ENCODE measurements at regions of chr17 and their contacts with region 1.

Region 1: DNA sequence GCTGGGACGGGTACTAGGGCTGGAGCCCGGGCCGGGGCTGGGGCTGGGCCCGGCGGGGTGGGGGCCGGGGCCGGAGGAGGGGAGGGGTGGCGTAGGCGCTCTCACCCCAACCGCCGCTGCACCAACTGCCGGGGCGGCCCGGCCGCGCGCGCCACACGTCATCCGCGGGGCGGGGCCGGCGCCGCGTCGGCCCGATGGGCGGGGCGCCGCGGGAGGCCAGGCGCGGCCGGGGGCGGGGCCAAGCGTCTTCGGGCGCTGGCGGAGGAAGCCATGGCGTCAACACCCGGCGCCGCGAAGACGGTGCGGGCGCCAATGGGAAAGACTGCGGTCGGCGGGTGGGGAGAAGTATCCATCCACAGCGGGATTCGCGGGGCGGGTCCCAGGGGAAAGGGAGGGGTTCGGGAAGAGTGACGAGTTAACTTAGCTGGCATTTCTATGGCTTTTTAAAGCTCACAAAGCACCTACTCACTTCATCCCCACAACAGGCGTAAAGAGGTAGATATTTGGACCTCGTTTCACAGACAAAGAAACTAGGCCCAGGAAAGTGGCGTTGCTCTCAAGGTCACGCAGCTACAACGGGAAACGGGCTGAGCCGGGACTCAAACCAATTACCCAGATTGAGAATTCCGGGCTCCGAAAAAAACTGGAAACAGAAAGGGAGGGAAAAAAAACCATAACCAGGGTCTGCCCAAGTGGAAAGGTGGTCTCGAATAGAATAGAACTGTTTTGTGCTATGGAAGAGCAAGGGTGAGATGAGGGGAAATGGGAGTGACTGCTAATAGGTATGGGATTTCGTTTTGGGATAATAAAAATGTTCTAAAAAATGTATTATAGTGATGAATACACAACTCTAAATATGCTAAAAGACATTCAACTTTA is at the start of gene SPAG9:
- DNase-seq: peak; percentile 92
- H3K4me3 Mint-ChIP-seq: peak within 1 kb of the TSS; percentile 98
- H3K27ac Mint-ChIP-seq: peak within 1 kb of the TSS; percentile 99
- H3K4me1 Mint-ChIP-seq: peaks cover 49% of the 10 kb centered on the region
- H3K27me3 Mint-ChIP-seq: no peaks in the 10 kb centered on the region
- total RNA-seq, gene SPAG9: 39.8 to 43.2 TPM

Region 2: GRCh38 chr17:50507871-50508572 is 613.0 kb before region 1 on chr17 and contains the start of gene MYCBPAP:
- CTCF ChIA-PET with region 1: no interaction called
- intact Hi-C with region 1: loop called (anchors 2 kb)
- DNase-seq: peak; percentile 88
- H3K4me3 Mint-ChIP-seq: peak within 1 kb of the TSS; percentile 82
- H3K27ac Mint-ChIP-seq: peak within 1 kb of the TSS; percentile 79
- H3K4me1 Mint-ChIP-seq: peaks cover 51% of the 10 kb centered on the region
- H3K27me3 Mint-ChIP-seq: no peaks in the 10 kb centered on the region
- total RNA-seq, gene MYCBPAP: 5.5 to 5.8 TPM

Region 3: DNA sequence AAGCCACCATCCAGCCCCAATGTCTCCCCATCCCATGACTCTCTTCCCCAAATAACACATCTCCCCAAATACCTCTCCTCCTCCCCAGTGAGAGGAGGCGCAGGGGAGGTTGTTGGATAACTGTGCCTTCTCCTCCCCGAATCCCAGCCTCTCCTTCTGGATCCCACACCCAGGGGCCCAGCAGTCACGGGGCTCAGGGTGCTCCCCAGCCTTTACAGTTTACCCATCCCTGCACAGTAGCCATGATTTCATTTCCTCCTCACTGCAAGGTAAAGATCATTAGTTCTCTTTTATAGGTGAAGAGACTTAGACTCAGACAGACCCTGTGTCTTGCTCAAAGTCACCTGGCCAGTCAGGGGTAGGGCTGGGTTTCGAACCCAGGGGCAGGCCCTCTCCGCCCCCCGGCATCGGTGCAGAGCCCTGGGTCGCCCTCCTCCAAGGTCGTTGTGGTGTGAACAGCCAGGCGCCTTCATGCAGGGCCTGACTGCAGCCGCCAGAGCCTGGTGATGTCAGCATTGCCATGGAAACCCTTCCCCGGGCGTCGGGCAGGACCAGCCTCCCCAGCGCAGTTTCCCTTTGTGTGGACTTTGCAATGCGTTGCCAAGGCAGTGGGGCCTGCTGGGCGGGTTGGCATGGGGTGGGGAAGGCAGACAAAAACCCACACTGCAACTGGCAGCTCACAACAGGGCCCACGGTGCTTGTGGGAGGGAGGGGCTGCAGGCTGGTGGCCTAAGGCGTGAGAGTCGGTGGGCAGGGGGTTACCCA is 201.5 kb before region 1 on chr17:
- CTCF ChIA-PET with region 1: no interaction called
- intact Hi-C with region 1: loop called (anchors 5 kb)
- DNase-seq: peak; percentile 91
- H3K4me3 Mint-ChIP-seq: peak overlapping the region; percentile 50
- H3K27ac Mint-ChIP-seq: peak overlapping the region; percentile 86
- H3K4me1 Mint-ChIP-seq: peaks cover 56% of the 10 kb centered on the region
- H3K27me3 Mint-ChIP-seq: no peaks in the 10 kb centered on the region

Region 4: GRCh38 chr17:51097708-51098446 is 23.1 kb before region 1 on chr17:
- CTCF ChIA-PET with region 1: no interaction called
- intact Hi-C with region 1: loop called (anchors 1 kb)
- DNase-seq: no peak
- H3K4me3 Mint-ChIP-seq: no peak overlapping the region
- H3K27ac Mint-ChIP-seq: no peak overlapping the region
- H3K4me1 Mint-ChIP-seq: peaks cover 32% of the 10 kb centered on the region
- H3K27me3 Mint-ChIP-seq: no peaks in the 10 kb centered on the region

Region 5: DNA sequence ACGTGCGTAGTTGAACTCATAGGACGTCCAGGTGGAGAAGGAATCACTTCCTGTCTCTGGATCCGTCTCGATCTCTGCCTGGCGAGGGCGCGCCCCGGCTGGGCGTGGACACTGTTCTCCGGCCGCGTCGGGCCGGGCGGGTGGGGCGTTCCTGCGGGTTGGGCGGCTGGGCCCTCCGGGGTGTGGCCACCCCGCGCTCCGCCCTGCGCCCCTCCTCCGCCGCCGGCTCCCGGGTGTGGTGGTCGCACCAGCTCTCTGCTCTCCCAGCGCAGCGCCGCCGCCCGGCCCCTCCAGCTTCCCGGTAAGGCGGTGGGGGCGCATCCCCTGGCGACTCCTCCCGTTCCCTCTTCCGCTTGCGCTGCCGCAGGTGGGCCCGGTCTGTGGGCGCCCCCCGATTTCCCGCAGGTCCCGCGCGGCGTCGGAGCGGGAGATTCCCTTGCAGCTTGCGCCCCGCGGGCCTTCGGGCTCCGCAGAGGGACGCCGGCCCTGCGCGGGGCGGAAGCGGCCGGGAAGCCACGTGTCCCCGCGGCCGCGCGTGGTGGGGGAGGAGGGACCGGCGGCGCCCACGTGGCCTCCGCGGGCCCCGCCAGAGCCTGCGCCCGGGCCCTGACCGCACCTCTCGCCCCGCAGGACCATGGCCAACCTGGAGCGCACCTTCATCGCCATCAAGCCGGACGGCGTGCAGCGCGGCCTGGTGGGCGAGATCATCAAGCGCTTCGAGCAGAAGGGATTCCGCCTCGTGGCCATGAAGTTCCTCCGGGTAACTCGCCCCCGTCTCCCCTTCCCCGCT is 45.4 kb after region 1 on chr17 and contains the start of gene NME2:
- CTCF ChIA-PET with region 1: interaction called, 6 read pairs
- intact Hi-C with region 1: loop called (anchors 1 kb)
- DNase-seq: peak; percentile 50
- H3K4me3 Mint-ChIP-seq: peak within 1 kb of the TSS; percentile 81
- H3K27ac Mint-ChIP-seq: peak within 1 kb of the TSS; percentile 90
- H3K4me1 Mint-ChIP-seq: peaks cover 29% of the 10 kb centered on the region
- H3K27me3 Mint-ChIP-seq: no peaks in the 10 kb centered on the region
- total RNA-seq, gene NME2: 1,086 to 1,094 TPM

Region 6: DNA sequence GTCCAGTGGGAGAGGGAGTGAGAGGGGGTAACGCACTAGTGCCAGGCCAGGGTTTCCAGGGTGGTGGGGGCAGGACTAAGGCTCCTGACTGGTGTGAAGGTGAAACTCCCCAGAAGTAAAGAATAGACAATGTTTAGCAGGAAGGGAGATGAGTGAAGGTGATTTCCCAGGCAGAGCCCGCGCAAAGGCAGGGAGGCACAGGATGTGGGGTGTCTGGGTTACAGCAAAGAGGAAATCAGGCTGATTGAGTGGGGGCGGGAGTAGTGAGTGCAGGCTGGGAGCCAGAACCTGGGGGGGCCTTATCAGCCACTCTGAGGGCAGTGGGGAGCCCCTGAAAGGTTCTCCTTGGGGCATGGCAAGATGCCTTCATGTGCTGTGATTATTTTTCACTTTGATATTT is 306.9 kb after region 1 on chr17:
- CTCF ChIA-PET with region 1: no interaction called
- intact Hi-C with region 1: loop called (anchors 5 kb)
- DNase-seq: peak; percentile 92
- H3K4me3 Mint-ChIP-seq: peak overlapping the region; percentile 48
- H3K27ac Mint-ChIP-seq: peak overlapping the region; percentile 93
- H3K4me1 Mint-ChIP-seq: peaks cover 65% of the 10 kb centered on the region
- H3K27me3 Mint-ChIP-seq: no peaks in the 10 kb centered on the region

Measured in activated naive CD4-positive, alpha-beta T cell treated with anti-CD3 and anti-CD28 coated beads for 36 hours (primary cell).